ENCODE measurements at regions of chr4 and their contacts with region 1.

Region 1: DNA sequence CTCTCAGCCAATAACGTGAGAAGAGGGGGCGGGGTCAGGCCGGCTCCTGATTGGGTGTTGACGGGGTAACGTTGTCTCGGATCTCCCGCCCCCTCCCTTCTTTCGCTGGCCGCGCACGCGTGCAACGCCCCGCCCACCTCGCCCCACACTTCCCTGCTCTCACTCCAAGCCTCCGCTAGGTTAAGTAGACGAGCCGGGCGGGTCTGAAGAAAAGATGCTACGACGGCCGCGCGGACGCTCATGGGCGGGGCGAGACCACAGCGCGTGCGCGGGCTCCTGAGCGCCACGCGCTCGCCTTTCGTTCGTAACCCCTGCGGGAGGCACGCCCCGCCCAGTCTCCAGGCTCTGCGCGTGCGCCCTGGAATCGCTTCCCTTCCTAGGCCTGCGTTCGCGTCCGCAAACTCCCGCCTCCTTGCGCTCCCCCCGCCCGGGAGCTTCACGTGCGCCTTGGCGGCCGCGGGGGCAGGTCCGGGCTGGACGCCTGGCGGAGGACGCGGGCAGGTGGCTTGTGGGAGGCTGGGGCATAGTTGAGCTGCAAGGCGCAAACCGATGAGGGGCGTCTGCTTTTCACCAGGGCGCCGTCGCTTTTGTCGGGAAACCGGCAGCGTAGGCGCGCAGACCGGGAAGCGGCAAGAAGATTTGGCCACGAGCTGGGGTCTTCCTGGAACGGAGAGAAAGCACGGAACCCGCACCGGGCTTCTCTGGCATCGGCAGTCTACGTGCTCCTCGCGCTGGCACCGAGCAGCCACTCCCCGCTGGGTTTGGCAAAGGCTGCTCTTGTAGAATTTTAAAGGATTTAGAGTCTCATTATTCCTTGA is 467 bp upstream of the PGRMC2 start:
- DNase-seq: peak; percentile 100
- ATAC-seq: peak; percentile 96

Region 2: DNA sequence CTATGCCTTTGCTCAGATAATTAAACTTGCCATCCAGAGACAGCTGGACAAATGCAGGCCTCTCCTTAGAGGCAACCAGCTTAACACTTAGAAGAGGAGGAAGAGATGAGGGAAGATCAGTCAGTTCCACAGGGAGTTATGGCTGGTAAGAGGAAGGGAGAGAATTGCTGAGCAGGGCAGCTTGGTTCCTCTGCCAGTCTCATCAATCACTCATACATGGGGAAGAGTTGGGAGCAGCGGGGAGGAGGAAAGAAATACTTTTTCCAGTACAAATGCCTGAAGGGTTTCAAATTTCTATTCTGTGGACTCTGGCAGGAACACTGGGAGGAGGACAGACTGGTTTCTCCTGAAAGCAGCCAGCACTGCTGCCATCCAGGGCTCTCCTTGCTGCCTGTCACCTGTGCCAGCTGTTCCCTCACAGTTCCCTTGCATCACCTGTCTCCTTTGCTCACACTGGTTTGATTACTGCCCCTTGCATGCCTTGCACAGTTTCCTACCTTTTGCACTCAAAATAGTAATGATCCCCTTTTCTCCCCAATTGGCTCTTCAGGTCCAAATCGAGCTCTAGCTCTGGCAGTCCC is 60.0 kb before region 1 on chr4:
- intact Hi-C with region 1: no loop called
- DNase-seq: no peak
- ATAC-seq: no peak

Region 3: GRCh38 chr4:128322995-128323394 is 34.9 kb after region 1 on chr4:
- intact Hi-C with region 1: no loop called
- DNase-seq: no peak
- ATAC-seq: no peak

Region 4: DNA sequence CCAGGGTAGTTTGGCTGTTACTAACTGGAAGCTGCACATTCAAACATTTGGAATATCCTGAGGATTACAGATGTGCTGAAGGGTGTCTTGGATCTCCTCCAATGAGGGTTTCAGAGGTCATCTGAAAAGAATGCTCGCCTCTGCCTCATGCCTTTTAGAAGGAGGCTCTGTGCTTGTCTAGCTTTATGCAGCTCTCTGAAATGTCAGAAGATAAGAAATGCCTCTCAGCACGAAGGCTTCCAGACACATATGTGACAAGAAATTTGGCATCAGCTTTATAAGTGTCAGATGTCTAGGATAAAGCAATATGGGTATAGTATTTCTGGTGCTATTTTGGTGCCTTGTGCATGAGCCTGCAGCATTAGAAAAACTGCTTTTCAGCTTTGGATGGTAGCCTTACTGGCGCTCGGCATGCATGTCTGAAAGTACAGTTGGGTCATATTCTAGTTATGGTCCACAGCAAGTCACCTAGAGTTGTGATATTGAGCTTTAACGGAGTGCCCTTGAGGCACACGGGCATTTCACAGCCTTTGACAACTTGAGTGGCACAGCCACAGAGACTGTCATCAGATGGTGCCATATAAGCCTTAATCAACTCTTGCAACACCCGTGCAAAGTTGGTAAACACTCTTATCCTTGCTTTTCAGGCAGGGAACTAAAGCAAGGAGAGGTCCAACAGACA is 70.3 kb after region 1 on chr4:
- intact Hi-C with region 1: loop called (anchors 1 kb)
- DNase-seq: no peak
- ATAC-seq: peak; percentile 90

Region 5: DNA sequence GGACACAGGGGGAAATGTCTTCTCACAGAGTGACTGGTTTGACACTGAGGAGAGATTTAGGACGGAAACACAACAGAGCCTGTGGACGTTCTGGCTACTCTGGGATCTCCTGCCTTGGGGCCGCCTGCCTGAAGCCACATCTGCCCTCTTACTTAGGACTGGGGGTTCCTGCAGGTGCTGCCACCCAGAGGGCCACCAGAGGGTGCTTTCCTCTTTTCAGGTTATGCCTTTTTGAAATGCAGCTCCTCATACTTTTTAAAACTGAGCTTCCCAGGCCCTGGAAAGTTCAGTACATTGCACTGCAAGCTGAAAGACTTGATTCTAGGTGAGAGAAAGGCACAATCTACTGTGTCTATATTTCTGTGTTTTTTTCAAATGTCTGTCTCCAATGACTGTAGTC is 91.8 kb after region 1 on chr4:
- intact Hi-C with region 1: loop called (anchors 2 kb)
- DNase-seq: no peak
- ATAC-seq: peak; percentile 71

Region 6: GRCh38 chr4:128386761-128387599 is 98.9 kb after region 1 on chr4:
- intact Hi-C with region 1: loop called (anchors 2 kb)
- DNase-seq: peak; percentile 89
- ATAC-seq: peak; percentile 95

Region 7: GRCh38 chr4:128558896-128559679 is 271.0 kb after region 1 on chr4:
- intact Hi-C with region 1: loop called (anchors 10 kb)
- DNase-seq: no peak
- ATAC-seq: peak; percentile 32

Region 8: DNA sequence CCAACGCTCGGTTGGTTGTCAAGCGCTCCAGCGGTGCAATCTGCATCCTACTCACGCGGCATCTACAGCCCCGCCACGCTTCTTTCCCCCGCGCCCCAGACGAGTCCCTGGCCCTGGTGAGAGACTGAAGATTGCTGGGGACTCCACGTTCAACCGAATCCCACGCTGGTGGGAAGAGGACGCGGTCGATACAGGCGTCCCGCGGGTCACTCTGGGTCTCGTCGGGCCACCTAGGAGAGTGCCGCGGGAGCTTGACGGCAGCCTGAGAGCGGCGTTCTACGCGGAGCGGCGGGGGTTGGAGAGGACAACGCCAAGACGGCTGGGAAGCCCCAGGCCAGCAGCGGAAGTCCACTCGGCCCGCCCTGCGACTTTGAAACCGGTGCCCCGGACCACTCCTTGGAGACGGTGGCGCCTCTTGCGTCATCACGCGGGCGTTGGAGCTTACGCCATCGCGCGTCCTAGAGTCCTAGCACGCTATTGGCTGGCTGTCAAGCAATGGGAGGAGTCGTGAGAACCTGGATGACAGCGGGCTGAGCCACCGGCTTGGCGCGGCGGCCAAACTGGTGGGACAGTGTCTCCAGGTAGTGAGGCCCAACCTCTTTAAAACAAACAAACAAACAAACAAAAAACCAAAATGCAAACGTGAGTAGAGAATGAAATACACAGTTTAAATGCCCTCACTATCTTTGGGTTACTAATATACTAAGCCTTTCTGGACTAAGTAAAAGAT is 805.3 kb after region 1 on chr4 and contains the start of gene SCLT1:
- intact Hi-C with region 1: loop called (anchors 10 kb)
- DNase-seq: peak; percentile 99
- ATAC-seq: peak; percentile 99
- total RNA-seq, gene SCLT1: 7.2 TPM